ENCODE measurements at regions of chr1 and their contacts with region 1.

Region 1: DNA sequence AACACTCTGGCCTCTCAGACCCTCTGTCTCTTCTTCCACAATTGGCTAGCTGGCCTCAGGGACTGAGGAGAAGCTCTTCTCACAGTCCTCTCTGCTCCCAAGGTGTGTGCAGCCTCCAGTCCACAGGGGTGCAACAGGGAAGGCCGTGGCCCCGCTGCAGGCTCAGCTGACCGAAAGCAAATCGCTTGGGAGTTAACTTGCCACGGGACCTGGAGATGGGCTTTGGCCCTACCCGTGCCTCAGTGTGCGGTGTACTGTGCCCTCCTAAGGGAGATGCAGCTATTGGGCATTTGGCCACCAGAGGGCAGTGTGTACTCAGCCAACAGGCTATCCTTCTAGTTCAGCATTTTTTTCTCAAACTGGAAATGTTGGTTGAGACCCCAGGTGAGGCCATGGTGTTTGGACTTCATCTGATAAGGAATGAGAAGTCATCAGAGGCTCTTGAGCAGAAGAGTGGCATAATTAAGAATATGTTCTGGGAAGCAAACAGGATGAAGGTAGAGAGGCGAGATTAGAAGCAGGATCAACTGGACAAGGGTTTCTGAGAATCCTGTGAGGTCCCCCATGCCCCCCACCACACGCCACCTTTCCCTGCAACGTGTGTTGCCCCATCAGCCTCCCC is 42.5 kb upstream of the TMEM125 start:
- DNase-seq: peak; percentile 85
- ATAC-seq: peak; percentile 73 to 84

Region 2: GRCh38 chr1:43098200-43098599 is 129.1 kb before region 1 on chr1:
- intact Hi-C with region 1: no loop called
- DNase-seq: no peak
- ATAC-seq: no peak

Region 3: GRCh38 chr1:43317817-43318471 is 90.7 kb after region 1 on chr1:
- intact Hi-C with region 1: no loop called
- DNase-seq: peak; percentile 13
- ATAC-seq: peak; percentile 8 to 38

Region 4: GRCh38 chr1:43414634-43415223 is 187.5 kb after region 1 on chr1:
- intact Hi-C with region 1: loop called (anchors 5 to 10 kb)
- DNase-seq: peak; percentile 62
- ATAC-seq: peak; percentile 76 to 84

Region 5: DNA sequence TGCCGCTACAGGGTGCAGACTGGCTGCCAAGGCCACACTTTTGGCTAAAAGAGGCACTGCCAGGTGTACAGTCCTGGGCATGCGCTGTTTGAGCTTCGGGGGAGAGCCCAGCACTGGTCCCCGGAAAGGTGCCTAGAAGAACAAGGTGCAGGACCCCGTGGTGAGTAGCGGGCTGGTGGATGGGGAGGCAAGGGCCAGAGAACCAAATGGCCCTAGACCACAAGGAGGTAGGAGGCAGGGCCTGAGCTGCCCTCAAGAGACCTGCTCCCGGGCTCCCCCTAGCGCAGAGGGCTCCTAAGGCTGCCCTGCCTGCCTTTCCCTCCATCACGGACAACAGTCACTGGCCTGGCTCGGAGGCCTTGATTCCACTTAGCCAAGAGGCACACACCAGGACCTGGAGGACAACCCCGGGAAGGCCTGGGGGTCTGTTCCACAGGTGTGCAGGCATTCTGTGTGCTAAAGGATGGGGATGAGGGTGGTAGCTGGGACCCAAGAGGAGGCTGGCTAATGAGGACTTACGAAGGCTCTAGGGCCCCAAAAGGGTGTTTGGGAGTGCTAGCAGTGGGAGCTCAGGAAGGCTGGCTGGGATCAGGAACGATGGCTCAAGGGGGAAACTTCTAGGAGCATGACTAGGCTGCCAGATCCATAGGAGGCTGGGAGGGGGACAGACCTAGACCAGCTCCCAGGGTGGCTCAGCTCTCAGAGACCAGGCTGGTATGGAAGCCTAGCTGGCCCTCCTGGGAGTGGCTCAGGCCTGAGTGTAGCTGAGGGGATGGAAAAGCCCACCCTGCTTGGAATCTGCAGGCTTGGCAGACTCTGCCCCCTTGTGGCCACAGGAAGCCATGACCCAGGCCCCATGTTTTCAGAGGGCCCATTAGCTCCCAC is 707.1 kb after region 1 on chr1:
- intact Hi-C with region 1: loop called in 1 of 2 experiments (anchors 10 kb)
- DNase-seq: peak; percentile 54
- ATAC-seq: peak; percentile 54 to 67